ENCODE measurements at regions of chr15 and their contacts with region 1.

Region 1: DNA sequence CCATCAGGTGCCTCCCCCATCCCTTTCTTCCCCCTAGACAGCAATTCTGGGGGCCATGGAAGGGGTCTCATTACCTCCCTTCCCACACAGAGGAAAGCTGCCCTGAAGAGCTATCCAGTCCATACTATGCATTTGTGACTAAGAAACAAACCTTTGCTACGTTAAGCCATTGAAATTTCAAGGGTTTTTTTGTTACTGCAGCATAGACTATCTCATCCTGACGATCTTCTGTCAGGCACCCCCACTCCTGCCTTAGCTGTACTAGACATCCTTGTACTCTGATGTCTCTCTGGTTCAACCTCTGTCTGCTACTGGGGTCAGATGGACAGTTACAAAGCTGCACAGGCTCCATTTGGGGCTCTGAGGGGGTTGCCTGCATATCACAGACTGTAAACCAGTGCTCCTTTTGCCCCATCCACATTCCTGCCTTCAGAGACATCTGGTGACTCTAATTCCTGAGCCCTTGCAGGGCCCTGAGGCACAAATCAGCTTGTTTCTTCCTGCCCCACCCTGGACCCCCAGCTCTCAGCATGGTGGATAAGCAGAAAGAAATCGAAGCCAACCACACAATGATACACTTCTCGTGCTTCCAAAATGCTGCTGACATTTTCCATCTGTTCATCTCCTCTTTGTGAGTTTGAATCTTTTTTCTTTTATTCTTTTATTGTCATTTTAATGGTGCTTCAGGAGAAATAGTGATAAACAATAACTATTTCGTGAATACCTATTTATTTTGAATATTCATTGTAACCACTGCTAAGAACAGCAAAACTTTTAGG is 21.6 kb upstream of the NSMCE3 start:
- DNase-seq: no peak
- ATAC-seq: no peak
- H3K4me3 ChIP-seq: no peak overlapping the region
- H3K4me3 Mint-ChIP-seq: no peak overlapping the region
- H3K27ac ChIP-seq: no peak overlapping the region
- H3K27ac Mint-ChIP-seq: no peak overlapping the region
- H3K4me1 ChIP-seq: no peaks in the 10 kb centered on the region
- H3K4me1 Mint-ChIP-seq: no peaks in the 10 kb centered on the region
- H3K27me3 ChIP-seq: no peaks in the 10 kb centered on the region
- H3K27me3 Mint-ChIP-seq: peaks cover 20% of the 10 kb centered on the region
- CTCF ChIP-seq: no peak

Region 2: GRCh38 chr15:29233566-29233965 is 57.7 kb before region 1 on chr15:
- CTCF ChIA-PET with region 1: no interaction called
- POLR2A ChIA-PET with region 1: no interaction called
- intact Hi-C with region 1: loop called in 1 of 2 experiments (anchors 10 kb)
- DNase-seq: no peak
- ATAC-seq: no peak
- H3K4me3 ChIP-seq: no peak overlapping the region
- H3K4me3 Mint-ChIP-seq: no peak overlapping the region
- H3K27ac ChIP-seq: no peak overlapping the region
- H3K27ac Mint-ChIP-seq: no peak overlapping the region
- H3K4me1 ChIP-seq: no peaks in the 10 kb centered on the region
- H3K4me1 Mint-ChIP-seq: no peaks in the 10 kb centered on the region
- H3K27me3 ChIP-seq: no peaks in the 10 kb centered on the region
- H3K27me3 Mint-ChIP-seq: peaks cover 35% of the 10 kb centered on the region
- CTCF ChIP-seq: no peak

Region 3: GRCh38 chr15:31049111-31049510 is 1757.9 kb after region 1 on chr15:
- CTCF ChIA-PET with region 1: no interaction called
- POLR2A ChIA-PET with region 1: no interaction called
- intact Hi-C with region 1: no loop called
- DNase-seq: no peak
- ATAC-seq: no peak
- H3K4me3 ChIP-seq: no peak overlapping the region
- H3K4me3 Mint-ChIP-seq: no peak overlapping the region
- H3K27ac ChIP-seq: no peak overlapping the region
- H3K27ac Mint-ChIP-seq: no peak overlapping the region
- H3K4me1 ChIP-seq: no peaks in the 10 kb centered on the region
- H3K4me1 Mint-ChIP-seq: peaks cover 5% of the 10 kb centered on the region
- H3K27me3 ChIP-seq: no peaks in the 10 kb centered on the region
- H3K27me3 Mint-ChIP-seq: peaks cover 6% of the 10 kb centered on the region
- CTCF ChIP-seq: no peak

Measured in CD8-positive, alpha-beta T cell (primary cell).